Activated CD4-positive, alpha-beta memory T cell treated with anti-CD3 and anti-CD28 coated beads, Interleukin-2, amount 10 ng/mL, durations not matched to agents 7 days and 5 days (primary cell): ENCODE measurements at regions of chr9 and their contacts with region 1.

Region 1: GRCh38 chr9:21357479-21358460 is 7.1 kb upstream of the IFNA6 start:
- DNase-seq: no peak
- H3K4me3 Mint-ChIP-seq: peak overlapping the region; percentile 43
- H3K27ac Mint-ChIP-seq: peak overlapping the region; percentile 55
- H3K4me1 Mint-ChIP-seq: peaks cover 16% of the 10 kb centered on the region
- H3K27me3 Mint-ChIP-seq: peaks cover 48% of the 10 kb centered on the region

Region 2: DNA sequence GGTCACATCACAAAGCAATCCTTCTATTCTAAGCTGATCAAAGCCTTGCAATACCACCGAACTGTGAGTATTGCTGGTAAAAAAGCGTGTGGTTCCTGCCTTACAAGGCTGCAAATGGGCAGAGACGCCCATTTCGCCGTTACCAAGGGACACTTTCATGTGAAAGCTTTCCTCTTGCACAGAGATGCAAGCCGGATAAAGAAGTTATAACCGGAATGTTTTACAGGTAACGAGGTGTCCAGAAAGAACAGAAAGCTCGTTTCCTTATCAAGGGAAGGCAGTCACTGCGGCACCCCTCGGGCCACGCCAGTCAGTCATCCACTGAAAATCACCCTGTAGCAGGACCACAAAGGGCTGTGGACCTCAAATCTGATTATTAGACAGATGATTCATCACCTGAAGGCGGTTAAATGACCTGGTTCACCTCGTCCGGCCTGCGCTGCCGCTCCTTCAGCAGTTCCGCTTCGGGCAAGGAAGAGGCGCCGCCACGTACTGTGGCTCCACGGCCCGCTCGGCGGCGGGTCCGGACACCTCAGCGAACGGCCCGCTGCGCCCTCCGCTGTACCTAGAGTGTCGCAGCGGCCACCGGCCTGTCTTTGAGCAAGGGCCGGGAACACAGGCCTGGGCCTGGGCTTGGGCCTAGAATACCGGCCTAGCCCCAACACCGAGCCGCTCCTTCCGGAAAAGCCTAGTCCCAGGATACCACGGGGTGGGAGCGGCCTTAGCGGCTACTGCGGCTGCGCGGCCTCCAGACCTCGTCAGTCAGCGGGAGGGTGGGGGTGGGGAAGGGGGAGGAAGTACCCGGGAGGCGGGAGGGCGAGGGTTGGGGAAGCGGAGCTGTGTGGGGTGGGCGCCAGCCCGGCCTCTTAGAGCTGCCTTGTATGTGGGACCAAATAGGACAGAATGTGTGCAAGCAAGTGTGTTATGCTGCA is 22.8 kb before region 1 on chr9 and contains the start of gene KLHL9:
- CTCF ChIA-PET with region 1: interaction called, 4 read pairs
- POLR2A ChIA-PET with region 1: interaction called, 13 read pairs
- DNase-seq: peak; percentile 86
- H3K4me3 Mint-ChIP-seq: peak within 1 kb of the TSS; percentile 85
- H3K27ac Mint-ChIP-seq: peak within 1 kb of the TSS; percentile 85
- H3K4me1 Mint-ChIP-seq: peaks cover 47% of the 10 kb centered on the region
- H3K27me3 Mint-ChIP-seq: peaks cover 14% of the 10 kb centered on the region
- total RNA-seq, gene KLHL9: 17.0 to 18.0 TPM